ENCODE measurements at regions of chrX and their contacts with region 1.

Region 1: GRCh38 chrX:72126539-72127140 is 5.1 kb downstream of the RTL5 start:
- DNase-seq: peak; percentile 86
- ATAC-seq: peak; percentile 91
- H3K4me3 Mint-ChIP-seq: no peak overlapping the region
- H3K27ac Mint-ChIP-seq: no peak overlapping the region
- H3K4me1 Mint-ChIP-seq: peaks cover 44% of the 10 kb centered on the region
- H3K27me3 Mint-ChIP-seq: peaks cover 56% of the 10 kb centered on the region

Region 2: DNA sequence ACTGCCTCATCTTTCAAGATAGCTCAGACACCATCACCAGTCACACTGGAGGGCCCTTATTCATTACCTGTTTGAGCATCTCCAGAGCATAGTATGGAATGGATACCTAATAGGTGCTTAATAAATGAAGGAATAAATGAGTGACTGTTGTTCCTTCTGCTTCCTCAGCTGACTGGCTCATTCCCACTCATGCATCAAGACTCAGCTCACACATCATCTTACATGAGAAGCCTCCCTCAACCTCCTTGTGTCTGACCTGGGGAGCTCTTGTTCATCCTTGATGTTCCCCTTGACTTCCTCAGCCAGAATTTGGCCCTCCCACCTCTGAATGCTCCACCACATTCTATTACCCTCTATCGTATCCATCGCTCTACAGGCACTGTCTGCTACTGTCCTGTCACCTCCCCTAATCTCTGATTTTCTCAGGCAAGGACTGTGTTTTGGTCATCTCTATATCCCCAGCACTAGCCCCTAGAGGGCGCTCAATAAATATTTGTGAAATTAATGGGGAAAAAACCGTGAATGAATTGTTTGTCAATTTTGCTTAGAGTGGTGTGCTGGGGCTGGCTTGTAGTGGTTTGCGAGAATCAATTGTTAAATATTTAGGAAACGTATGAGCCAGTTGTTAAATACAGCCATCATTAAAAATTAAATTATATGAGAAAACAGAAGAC is 127.7 kb before region 1 on chrX:
- CTCF ChIA-PET with region 1: interaction called, 16 read pairs
- DNase-seq: peak; percentile 52
- ATAC-seq: peak; percentile 67
- H3K4me3 Mint-ChIP-seq: no peak overlapping the region
- H3K27ac Mint-ChIP-seq: no peak overlapping the region
- H3K4me1 Mint-ChIP-seq: peaks cover 8% of the 10 kb centered on the region
- H3K27me3 Mint-ChIP-seq: peaks cover 13% of the 10 kb centered on the region

Region 3: GRCh38 chrX:72018277-72019112 is 108.1 kb before region 1 on chrX:
- CTCF ChIA-PET with region 1: interaction called, 113 read pairs
- DNase-seq: peak; percentile 84
- ATAC-seq: peak; percentile 100
- H3K4me3 Mint-ChIP-seq: no peak overlapping the region
- H3K27ac Mint-ChIP-seq: no peak overlapping the region
- H3K4me1 Mint-ChIP-seq: peaks cover 18% of the 10 kb centered on the region
- H3K27me3 Mint-ChIP-seq: peaks cover 58% of the 10 kb centered on the region

Region 4: DNA sequence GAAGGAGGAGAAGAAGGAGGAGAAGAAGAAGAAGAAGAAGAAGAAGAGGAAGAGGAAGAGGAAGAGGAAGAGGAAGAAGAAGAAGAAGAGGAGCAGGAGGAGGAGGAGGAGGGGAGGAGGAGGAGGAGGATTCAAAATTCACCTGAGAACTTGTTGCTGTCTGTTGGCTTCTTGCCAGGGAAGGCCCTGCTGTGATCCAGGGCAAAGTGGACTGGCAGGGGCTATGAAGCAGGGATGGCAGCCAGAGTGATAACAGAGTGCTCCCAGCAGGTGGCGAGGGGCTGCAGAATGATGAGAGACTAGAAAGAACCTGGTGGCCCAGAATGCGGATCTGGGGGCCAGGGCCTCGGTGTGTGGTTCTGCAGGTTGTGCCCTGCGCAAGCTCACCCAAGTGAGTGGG is 77.7 kb before region 1 on chrX:
- CTCF ChIA-PET with region 1: interaction called, 24 read pairs
- DNase-seq: peak; percentile 43
- ATAC-seq: no peak
- H3K4me3 Mint-ChIP-seq: no peak overlapping the region
- H3K27ac Mint-ChIP-seq: no peak overlapping the region
- H3K4me1 Mint-ChIP-seq: peaks cover 12% of the 10 kb centered on the region
- H3K27me3 Mint-ChIP-seq: peaks cover 26% of the 10 kb centered on the region

Region 5: GRCh38 chrX:72169008-72169728 is 42.5 kb after region 1 on chrX:
- CTCF ChIA-PET with region 1: no interaction called
- DNase-seq: peak; percentile 67
- ATAC-seq: peak; percentile 93
- H3K4me3 Mint-ChIP-seq: peak overlapping the region; percentile 68
- H3K27ac Mint-ChIP-seq: peak overlapping the region; percentile 93
- H3K4me1 Mint-ChIP-seq: peaks cover 8% of the 10 kb centered on the region
- H3K27me3 Mint-ChIP-seq: peaks cover 2% of the 10 kb centered on the region

Measured in activated CD8-positive, alpha-beta memory T cell treated with anti-CD3 and anti-CD28 coated beads, Interleukin-2, amount 10 ng/mL, durations not matched to agents 7 days and 5 days (primary cell).